ENCODE measurements at regions of chr3 and their contacts with region 1.

Region 1: GRCh38 chr3:188339410-188340295 is 185.7 kb downstream of the LPP start:
- DNase-seq: peak; percentile 76
- ATAC-seq: peak; percentile 89
- H3K4me3 Mint-ChIP-seq: peak overlapping the region; percentile 54
- H3K27ac Mint-ChIP-seq: peak overlapping the region; percentile 95
- H3K4me1 Mint-ChIP-seq: peaks cover 43% of the 10 kb centered on the region
- H3K27me3 Mint-ChIP-seq: no peaks in the 10 kb centered on the region

Region 2: GRCh38 chr3:188170461-188171459 is 168.9 kb before region 1 on chr3:
- CTCF ChIA-PET with region 1: no interaction called
- POLR2A ChIA-PET with region 1: no interaction called
- intact Hi-C with region 1: loop called in 1 of 2 experiments (anchors 1 kb)
- DNase-seq: peak; percentile 82
- ATAC-seq: peak; percentile 91
- H3K4me3 Mint-ChIP-seq: peak overlapping the region; percentile 20
- H3K27ac Mint-ChIP-seq: peak overlapping the region; percentile 88
- H3K4me1 Mint-ChIP-seq: peaks cover 59% of the 10 kb centered on the region
- H3K27me3 Mint-ChIP-seq: no peaks in the 10 kb centered on the region

Region 3: GRCh38 chr3:188294823-188295487 is 44.7 kb before region 1 on chr3:
- CTCF ChIA-PET with region 1: interaction called, 3 read pairs
- POLR2A ChIA-PET with region 1: interaction called, 8 read pairs
- intact Hi-C with region 1: loop called (anchors 1 kb)
- DNase-seq: peak; percentile 29
- ATAC-seq: peak; percentile 37
- H3K4me3 Mint-ChIP-seq: no peak overlapping the region
- H3K27ac Mint-ChIP-seq: peak overlapping the region; percentile 69
- H3K4me1 Mint-ChIP-seq: peaks cover 74% of the 10 kb centered on the region
- H3K27me3 Mint-ChIP-seq: no peaks in the 10 kb centered on the region

Region 4: DNA sequence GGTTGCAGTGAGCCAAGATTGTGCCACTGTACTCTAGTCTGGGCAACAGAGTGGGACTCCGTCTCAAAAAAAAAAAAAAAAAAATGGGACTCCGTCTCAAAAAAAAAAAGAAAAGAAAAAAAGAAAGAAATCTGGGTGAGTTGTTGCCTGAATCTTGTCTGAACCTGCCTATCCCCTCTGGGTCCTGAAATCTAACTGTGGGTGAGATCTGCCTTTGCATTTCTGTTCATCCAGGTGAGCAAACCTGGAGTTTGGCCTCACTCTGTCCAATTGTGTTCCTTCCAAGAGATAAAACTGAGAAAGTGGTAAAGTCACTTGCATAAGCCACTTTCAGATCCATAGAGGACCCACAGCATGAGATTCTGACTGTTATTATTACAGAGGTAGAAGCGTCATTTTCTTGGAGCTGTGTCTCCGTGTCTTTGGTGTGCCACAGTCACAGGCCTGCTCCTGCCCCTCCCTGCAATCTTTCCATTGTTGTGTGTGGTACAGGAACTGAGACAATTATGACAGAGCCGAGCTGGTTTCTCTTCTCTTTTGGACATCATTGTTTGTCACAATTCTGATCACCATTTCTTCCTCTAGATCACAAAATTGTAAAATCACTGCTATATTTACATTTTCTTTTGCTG is 50.2 kb after region 1 on chr3:
- CTCF ChIA-PET with region 1: no interaction called
- POLR2A ChIA-PET with region 1: no interaction called
- intact Hi-C with region 1: loop called (anchors 1 to 2 kb)
- DNase-seq: peak; percentile 81
- ATAC-seq: peak; percentile 92
- H3K4me3 Mint-ChIP-seq: peak overlapping the region; percentile 22
- H3K27ac Mint-ChIP-seq: peak overlapping the region; percentile 78
- H3K4me1 Mint-ChIP-seq: peaks cover 41% of the 10 kb centered on the region
- H3K27me3 Mint-ChIP-seq: no peaks in the 10 kb centered on the region

Region 5: DNA sequence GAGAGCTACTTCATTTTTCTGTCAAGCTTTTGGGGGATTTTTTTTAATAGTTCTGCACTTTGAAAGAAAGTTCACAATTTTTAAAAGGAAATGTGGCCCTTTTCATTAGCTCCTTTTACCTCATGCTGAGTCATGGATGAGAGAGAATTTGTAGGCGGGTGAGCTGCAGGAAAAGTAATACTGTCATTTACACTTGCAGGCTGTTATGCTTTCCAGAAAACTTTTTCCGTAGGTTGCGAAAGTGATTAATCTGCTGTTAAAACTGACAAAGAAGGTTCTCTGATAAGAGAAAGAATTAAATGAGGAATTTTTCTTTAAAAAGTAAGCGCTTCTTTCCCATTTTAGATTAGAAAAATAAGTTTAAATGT is 244.5 kb after region 1 on chr3:
- CTCF ChIA-PET with region 1: no interaction called
- POLR2A ChIA-PET with region 1: no interaction called
- intact Hi-C with region 1: loop called in 1 of 2 experiments (anchors 1 kb)
- DNase-seq: peak; percentile 43
- ATAC-seq: peak; percentile 60
- H3K4me3 Mint-ChIP-seq: no peak overlapping the region
- H3K27ac Mint-ChIP-seq: no peak overlapping the region
- H3K4me1 Mint-ChIP-seq: peaks cover 12% of the 10 kb centered on the region
- H3K27me3 Mint-ChIP-seq: no peaks in the 10 kb centered on the region

Region 6: DNA sequence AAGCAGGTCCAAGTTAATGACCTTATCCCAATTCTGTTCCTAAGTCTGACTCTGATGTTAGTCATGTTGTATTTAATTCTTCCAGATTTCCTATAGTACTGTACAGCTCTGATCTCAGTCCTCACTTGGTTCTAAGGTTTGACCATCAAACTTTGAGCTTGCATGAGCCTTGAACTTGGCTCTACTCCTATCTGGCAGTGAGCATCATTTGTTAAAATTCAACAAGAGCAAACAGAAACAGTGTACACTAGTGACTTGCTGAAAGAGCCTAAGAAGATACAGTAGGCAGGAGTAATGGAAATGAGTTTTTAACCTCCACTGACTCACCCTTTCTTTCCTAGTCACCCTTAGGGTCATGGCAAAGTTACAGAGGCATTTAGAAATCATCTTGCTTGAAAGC is 381.0 kb after region 1 on chr3:
- CTCF ChIA-PET with region 1: no interaction called
- POLR2A ChIA-PET with region 1: no interaction called
- intact Hi-C with region 1: no loop called
- DNase-seq: no peak
- ATAC-seq: peak; percentile 83
- H3K4me3 Mint-ChIP-seq: no peak overlapping the region
- H3K27ac Mint-ChIP-seq: no peak overlapping the region
- H3K4me1 Mint-ChIP-seq: peaks cover 37% of the 10 kb centered on the region
- H3K27me3 Mint-ChIP-seq: peaks cover 9% of the 10 kb centered on the region

Region 7: DNA sequence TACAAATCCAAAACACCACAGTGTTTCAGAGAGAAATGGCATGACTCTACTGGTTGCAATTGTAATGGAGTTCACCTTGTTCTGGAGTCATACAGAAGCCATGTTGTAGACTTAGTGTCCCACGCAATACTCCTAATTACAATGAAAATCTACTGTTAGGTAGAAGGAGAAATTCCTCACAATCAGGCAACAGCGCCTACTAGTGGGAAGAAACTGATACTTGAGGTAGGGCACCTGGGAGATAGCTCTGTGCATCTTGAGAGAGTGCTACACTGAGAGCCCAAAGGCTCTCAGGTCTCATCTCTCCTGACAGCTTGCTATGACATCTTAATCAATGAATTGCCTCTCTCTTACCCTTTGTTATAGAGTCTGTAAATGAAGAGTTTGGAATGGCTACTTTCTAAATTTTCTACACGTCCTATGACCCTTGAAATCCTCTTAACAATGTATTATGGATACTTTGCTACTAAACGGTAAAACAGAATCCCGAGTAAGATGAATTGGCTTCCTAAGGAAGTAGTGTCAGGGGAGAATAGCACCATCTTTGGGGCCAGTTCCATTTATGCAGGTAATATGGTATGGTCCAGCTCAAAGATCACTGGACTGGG is 409.5 kb after region 1 on chr3:
- CTCF ChIA-PET with region 1: no interaction called
- POLR2A ChIA-PET with region 1: no interaction called
- intact Hi-C with region 1: loop called in 1 of 2 experiments (anchors 5 kb)
- DNase-seq: peak; percentile 59
- ATAC-seq: no peak
- H3K4me3 Mint-ChIP-seq: no peak overlapping the region
- H3K27ac Mint-ChIP-seq: no peak overlapping the region
- H3K4me1 Mint-ChIP-seq: peaks cover 30% of the 10 kb centered on the region
- H3K27me3 Mint-ChIP-seq: no peaks in the 10 kb centered on the region

Measured in activated CD4-positive, alpha-beta T cell treated with anti-CD3 and anti-CD28 coated beads for 36 hours (primary cell).